WTC11 (cell line): ENCODE measurements at regions of chr10 and their contacts with region 1.

Region 1: DNA sequence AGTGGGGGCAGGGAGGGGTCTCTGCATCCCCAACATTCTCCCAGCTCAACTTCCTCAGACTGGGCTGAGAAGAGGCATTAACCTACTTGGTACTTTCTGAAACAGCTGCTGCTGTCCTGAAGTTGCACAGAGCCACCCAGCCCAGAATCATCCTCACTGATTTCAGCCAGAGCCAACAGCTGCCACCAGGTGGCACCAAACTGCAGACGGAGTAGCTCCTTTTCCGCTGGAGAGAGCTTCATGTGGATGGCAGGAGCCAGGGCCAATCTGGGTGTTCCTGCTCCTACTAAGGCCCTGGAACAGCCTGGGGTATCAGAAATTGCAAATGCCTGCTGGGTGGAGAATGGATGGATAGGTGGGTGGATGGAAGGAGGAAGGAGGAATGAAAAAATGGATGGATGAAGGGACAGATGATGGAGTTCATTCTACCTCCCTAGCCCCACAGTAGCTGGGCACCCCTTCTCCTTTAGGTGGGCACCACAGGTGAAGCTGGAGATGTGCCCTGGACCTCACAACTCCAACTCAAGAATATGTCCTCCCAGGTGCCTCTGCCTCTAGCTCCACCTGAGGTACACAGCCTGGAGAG is 11.8 kb upstream of the DRGX start:
- DNase-seq: peak; percentile 87
- ATAC-seq: peak; percentile 75
- H3K4me3 Mint-ChIP-seq: no peak overlapping the region
- H3K27ac Mint-ChIP-seq: no peak overlapping the region
- H3K4me1 Mint-ChIP-seq: peaks cover 33% of the 10 kb centered on the region
- H3K27me3 Mint-ChIP-seq: peaks cover 23% of the 10 kb centered on the region
- CTCF ChIP-seq: peak; percentile 79

Region 2: GRCh38 chr10:49297818-49298670 is 109.6 kb before region 1 on chr10:
- CTCF ChIA-PET with region 1: interaction called, 14 read pairs
- POLR2A ChIA-PET with region 1: no interaction called
- DNase-seq: no peak
- ATAC-seq: peak; percentile 43; the same call in 1 of the 2 replicates
- H3K4me3 Mint-ChIP-seq: no peak overlapping the region
- H3K27ac Mint-ChIP-seq: no peak overlapping the region
- H3K4me1 Mint-ChIP-seq: peaks cover 27% of the 10 kb centered on the region
- H3K27me3 Mint-ChIP-seq: no peaks in the 10 kb centered on the region; the same call in 1 of the 2 replicates
- CTCF ChIP-seq: no peak

Region 3: DNA sequence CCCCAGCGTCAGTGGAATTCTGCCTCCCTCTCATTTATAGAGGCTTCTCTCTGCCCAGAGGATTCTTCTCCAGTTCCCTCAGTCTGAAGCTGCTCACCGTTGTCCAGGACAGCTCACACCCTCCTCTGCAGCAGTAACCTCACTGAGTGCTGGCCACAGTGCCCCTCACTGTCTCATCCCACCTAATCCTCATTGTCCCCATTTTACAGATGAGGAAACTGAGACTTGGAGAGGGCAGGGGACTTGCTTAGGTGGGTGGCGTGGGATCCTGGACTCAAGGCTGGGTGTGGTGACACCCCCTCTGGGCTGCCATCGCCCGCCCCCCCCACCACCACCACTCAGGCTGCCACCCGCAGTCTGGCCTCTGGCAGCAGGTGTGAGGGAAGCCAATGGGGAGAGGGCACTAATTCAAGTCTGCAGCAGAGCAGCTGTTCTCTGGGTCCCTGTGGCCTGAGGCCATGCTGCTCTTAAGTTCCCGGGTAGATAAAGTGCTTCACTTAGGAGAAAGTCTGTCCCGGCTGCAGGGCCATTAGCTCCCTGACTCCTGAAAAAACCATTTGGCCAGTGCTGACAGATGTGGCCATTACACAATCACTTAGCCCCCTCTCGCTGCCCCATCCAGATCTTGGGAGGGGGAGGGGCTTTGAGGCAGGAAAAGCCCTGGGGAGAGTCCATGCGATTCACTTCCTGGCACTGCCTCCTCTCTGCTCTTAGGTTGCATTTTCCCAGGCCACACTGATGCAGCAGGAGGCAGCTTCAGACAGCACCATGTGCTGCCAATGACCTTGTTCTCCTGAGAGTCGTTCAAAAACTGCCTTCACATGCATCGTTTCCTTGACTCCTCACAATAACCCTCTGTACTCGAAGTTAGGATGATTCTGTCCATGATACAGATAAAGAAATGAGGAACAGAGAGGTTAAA is 48.0 kb before region 1 on chr10:
- CTCF ChIA-PET with region 1: interaction called, 15 read pairs
- POLR2A ChIA-PET with region 1: no interaction called
- DNase-seq: peak; percentile 39
- ATAC-seq: peak; percentile 89
- H3K4me3 Mint-ChIP-seq: no peak overlapping the region
- H3K27ac Mint-ChIP-seq: peak overlapping the region; percentile 41; the same call in 1 of the 2 replicates
- H3K4me1 Mint-ChIP-seq: peaks cover 21% of the 10 kb centered on the region
- H3K27me3 Mint-ChIP-seq: peaks cover 2% of the 10 kb centered on the region; the same call in 1 of the 2 replicates
- CTCF ChIP-seq: no peak

Region 4: GRCh38 chr10:49382826-49383225 is 24.8 kb before region 1 on chr10:
- CTCF ChIA-PET with region 1: interaction called, 27 read pairs
- POLR2A ChIA-PET with region 1: no interaction called
- DNase-seq: no peak
- ATAC-seq: no peak
- H3K4me3 Mint-ChIP-seq: no peak overlapping the region
- H3K27ac Mint-ChIP-seq: no peak overlapping the region
- H3K4me1 Mint-ChIP-seq: no peaks in the 10 kb centered on the region
- H3K27me3 Mint-ChIP-seq: no peaks in the 10 kb centered on the region; the same call in 1 of the 2 replicates
- CTCF ChIP-seq: no peak

Region 5: GRCh38 chr10:49419005-49419404 is 11.4 kb after region 1 on chr10:
- CTCF ChIA-PET with region 1: interaction called, 51 read pairs
- POLR2A ChIA-PET with region 1: no interaction called
- DNase-seq: no peak
- ATAC-seq: peak; percentile 77
- H3K4me3 Mint-ChIP-seq: no peak overlapping the region
- H3K27ac Mint-ChIP-seq: no peak overlapping the region
- H3K4me1 Mint-ChIP-seq: peaks cover 8% of the 10 kb centered on the region
- H3K27me3 Mint-ChIP-seq: peaks cover 4% of the 10 kb centered on the region
- CTCF ChIP-seq: no peak

Region 6: DNA sequence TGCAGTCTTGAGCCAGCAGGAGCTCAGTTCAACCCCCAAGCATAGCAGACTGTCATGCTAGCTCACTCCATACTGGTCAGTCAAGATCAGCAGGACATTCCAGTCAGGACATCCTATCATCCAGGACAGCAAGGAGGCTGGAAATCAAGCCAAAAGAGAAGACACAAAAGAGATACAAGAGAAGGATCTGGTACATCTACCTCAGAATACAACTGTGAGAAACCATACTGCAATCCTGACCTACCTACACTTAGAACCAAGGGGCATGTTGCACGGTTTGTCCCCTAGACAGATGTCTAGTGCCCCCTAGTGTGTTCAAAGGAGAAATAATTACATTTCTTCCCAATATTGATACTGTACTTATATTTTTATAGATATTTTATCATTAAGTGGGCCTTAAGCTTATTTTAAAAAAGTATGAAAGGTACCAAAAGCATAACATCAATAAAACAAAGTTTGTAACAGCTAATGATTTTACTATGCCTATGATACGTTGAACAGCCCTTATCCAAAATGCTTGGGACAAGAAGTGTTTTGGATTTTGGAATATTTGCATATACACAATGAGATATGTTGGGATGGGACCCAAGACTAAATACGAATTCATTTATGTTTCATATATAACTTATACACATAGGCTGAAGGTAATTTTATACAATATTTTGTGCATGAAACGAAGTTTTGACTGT is 104.6 kb after region 1 on chr10:
- CTCF ChIA-PET with region 1: interaction called, 144 read pairs
- POLR2A ChIA-PET with region 1: interaction called, 3 read pairs
- DNase-seq: no peak
- ATAC-seq: peak; percentile 73
- H3K4me3 Mint-ChIP-seq: no peak overlapping the region
- H3K27ac Mint-ChIP-seq: no peak overlapping the region
- H3K4me1 Mint-ChIP-seq: no peaks in the 10 kb centered on the region
- H3K27me3 Mint-ChIP-seq: no peaks in the 10 kb centered on the region
- CTCF ChIP-seq: peak; percentile 40; the same call in 1 of the 2 replicates

Region 7: DNA sequence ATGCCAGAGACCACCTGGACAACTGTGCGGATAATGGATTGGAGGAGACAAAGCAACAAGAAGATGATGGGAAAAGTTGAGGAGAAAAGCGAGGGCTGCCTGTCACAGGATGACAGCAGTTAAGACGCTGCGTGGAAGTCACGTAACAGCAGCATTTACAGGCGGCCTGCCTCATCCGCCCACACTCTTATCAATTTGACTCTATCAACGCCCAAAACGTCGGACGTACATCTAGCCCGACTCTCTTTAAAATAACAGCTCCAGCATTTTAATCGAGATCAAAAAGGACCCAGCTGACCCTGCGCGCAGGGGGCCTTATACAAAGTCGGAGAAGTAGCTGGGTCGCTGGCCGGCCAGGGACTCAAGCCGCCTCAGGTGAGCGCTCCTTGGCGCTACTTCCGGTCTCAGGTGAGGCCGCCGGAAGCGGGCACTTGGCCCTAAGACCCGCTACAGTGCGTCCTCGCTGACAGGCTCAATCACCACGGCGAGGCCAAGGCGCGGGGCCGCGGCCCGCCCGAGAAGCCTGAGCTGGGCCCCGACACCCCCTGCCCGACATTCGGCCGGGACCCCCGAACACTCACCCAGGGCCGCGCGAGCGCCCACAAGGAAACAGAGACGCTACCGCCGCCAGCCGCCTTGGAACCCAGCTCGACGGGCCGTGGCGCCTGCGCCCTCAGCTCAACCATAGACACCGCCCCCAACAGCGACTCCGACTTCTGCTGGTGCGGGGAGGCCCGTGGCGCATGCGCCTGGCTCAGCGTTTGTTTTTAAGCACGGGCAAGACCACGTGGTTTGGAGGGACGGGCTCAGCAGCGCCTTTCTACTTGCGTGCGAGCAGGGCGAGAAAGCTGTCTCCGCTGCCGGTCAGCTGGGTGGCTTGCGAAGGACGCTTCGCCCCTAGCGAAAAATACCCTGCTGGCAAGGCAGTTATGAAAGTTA is 131.0 kb after region 1 on chr10 and contains the start of gene ERCC6:
- CTCF ChIA-PET with region 1: interaction called, 11 read pairs
- POLR2A ChIA-PET with region 1: no interaction called
- DNase-seq: peak; percentile 97
- ATAC-seq: peak; percentile 93
- H3K4me3 Mint-ChIP-seq: peak within 1 kb of the TSS; percentile 86
- H3K27ac Mint-ChIP-seq: peak within 1 kb of the TSS; percentile 81; the same call in 1 of the 2 replicates
- H3K4me1 Mint-ChIP-seq: peaks cover 36% of the 10 kb centered on the region
- H3K27me3 Mint-ChIP-seq: peaks cover 36% of the 10 kb centered on the region
- CTCF ChIP-seq: no peak
- total RNA-seq, gene ERCC6: 10.9 to 14.5 TPM (median 14.3 TPM) in 3 replicates